T-cell (primary cell): ENCODE measurements at regions of chr5 and their contacts with region 1.

Region 1: DNA sequence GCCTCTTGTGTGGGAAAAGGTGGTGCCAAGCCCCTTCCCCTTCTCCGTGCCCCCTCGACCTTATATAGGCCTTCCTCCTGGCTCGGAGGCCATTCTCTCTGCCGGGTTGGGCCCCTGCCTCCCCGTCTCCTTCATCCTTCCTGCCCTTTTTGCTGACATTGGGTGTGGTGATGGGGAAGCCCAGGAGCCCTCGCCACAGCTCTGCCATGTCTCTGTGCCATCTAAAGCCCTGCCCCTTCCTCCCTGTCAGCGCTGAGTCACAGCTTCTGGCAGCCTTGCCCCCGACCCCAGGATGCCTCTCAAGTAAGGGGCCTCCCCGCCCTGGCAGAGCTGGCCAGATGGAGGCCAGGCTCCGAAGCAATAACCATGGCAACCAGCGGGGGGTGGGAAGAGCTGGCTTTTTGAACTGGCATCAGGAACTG is 30.4 kb downstream of the JADE2 start:
- DNase-seq: peak; percentile 38 to 89 (median 81)
- ATAC-seq: peak; percentile 88 to 93 (median 91)
- H3K4me3 ChIP-seq: no peak overlapping the region
- H3K4me3 Mint-ChIP-seq: peak overlapping the region; percentile 39 to 52 (median 41)
- H3K27ac ChIP-seq: peak overlapping the region; percentile 77
- H3K27ac Mint-ChIP-seq: peak overlapping the region; percentile 85 to 92
- H3K4me1 ChIP-seq: peaks cover 0 to 53% of the 10 kb centered on the region in 2 experiments
- H3K4me1 Mint-ChIP-seq: peaks cover 42 to 60% (median 50%) of the 10 kb centered on the region in 3 donors
- H3K27me3 ChIP-seq: no peaks in the 10 kb centered on the region
- H3K27me3 Mint-ChIP-seq: no peaks in the 10 kb centered on the region

Region 2: GRCh38 chr5:133895979-133896845 is 659.7 kb before region 1 on chr5:
- CTCF ChIA-PET with region 1: no interaction called
- POLR2A ChIA-PET with region 1: no interaction called
- DNase-seq: no peak
- ATAC-seq: no peak
- H3K4me3 ChIP-seq: no peak overlapping the region
- H3K4me3 Mint-ChIP-seq: no peak overlapping the region
- H3K27ac ChIP-seq: no peak overlapping the region
- H3K27ac Mint-ChIP-seq: no peak overlapping the region
- H3K4me1 ChIP-seq: no peaks in the 10 kb centered on the region
- H3K4me1 Mint-ChIP-seq: peaks cover 0 to 5% (median 0%) of the 10 kb centered on the region in 3 donors
- H3K27me3 ChIP-seq: peaks cover 0 to 21% of the 10 kb centered on the region in 2 experiments
- H3K27me3 Mint-ChIP-seq: no peaks in the 10 kb centered on the region

Region 3: DNA sequence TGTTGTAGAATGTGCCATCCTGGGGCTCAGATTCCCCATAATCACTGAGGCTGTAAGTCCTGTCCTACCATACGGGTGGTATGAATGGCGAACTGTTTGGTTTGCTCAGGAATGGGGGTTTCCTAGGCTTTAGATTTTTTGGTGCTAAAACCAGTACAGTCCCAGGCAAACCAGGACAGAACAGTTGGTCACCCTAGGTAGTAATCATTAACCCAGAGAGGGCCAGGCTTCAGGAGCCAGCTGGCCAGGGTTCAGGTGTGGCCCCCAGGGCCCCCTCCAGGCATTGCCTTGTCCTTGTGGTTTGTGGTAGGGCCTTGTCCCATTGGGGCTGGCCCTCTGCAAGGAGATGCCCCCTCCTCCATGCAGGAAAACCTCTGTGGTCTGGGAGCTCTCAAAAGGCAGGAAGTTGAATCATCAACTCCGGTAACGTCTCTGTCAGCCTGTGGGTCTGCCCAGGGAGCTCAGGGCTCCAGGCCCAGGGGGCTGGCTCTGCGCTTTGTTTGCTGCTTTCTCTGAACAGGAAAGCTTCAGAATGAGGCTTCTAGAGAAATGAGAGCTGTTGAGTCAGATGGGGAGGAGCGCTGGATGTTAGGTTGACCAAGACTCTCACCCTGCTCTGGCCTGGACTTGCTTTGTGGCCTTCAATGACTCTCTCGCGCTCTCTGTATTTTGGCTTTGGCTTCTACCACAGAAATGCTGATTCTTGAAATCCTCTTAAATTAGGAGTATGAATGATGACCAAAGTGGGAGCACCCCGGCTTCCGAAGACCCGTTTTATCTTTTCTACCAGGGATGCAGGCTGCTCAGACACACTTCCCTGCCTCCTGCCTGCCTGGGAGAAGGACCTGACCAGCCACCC is 52.6 kb before region 1 on chr5:
- CTCF ChIA-PET with region 1: no interaction called
- POLR2A ChIA-PET with region 1: no interaction called
- DNase-seq: peak in 29 of 35 experiments; percentile 6 to 66 (median 23)
- ATAC-seq: peak; percentile 83 to 97 (median 94)
- H3K4me3 ChIP-seq: peak overlapping the region in 1 of 2 donors; percentile 7
- H3K4me3 Mint-ChIP-seq: peak overlapping the region; percentile 31 to 64 (median 39)
- H3K27ac ChIP-seq: peak overlapping the region; percentile 70
- H3K27ac Mint-ChIP-seq: peak overlapping the region; percentile 92 to 93
- H3K4me1 ChIP-seq: peaks cover 12 to 26% of the 10 kb centered on the region in 2 experiments
- H3K4me1 Mint-ChIP-seq: peaks cover 22 to 32% (median 25%) of the 10 kb centered on the region in 3 donors
- H3K27me3 ChIP-seq: no peaks in the 10 kb centered on the region
- H3K27me3 Mint-ChIP-seq: no peaks in the 10 kb centered on the region

Region 4: DNA sequence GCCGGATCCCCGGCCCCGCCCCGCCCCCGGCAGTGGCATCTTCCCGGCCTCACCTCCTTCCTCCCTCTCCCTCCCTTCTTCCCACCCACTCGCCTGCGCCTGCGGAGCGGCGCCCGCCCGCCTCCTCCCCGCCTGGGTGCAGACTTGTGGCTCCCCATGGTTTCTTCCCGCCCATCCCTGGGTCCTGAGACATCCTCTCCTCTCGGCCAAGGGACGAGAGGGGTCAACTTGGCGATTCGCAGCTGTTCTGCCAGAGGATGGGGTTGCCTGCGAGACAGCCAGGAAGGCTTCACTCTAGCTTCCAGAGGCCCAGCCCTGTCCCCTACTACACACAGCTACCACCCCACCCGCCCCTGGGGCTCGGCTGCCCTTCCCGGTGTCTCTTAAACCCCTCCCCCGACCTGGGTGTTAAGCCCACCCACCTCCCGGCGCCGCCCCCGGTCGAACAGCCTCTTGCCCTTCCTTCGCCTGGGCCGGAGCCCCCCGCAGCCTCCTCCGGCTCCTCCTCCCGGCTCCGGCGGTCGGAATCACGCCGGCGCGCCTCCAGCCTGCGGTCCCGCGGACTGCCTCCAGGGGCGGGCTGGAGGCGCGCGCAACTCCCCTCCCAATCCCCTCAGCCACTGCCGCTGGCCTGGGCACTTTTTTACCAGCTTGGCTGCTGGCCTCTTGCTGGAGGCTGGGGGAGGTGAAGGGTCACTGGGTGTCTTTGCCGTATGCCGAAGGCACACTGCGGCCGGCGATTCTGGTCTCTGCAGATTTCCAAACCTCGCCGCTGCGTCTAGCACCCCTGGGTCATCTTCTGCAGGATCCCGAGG is 28.5 kb before region 1 on chr5:
- CTCF ChIA-PET with region 1: interaction called in 1 of 2 experiments, 14 read pairs
- POLR2A ChIA-PET with region 1: no interaction called
- DNase-seq: peak; percentile 21 to 82 (median 58)
- ATAC-seq: peak; percentile 29 to 38 (median 36)
- H3K4me3 ChIP-seq: peak overlapping the region; percentile 85 to 95
- H3K4me3 Mint-ChIP-seq: peak overlapping the region; percentile 87 to 99 (median 97)
- H3K27ac ChIP-seq: peak overlapping the region; percentile 43
- H3K27ac Mint-ChIP-seq: peak overlapping the region; percentile 89 to 92
- H3K4me1 ChIP-seq: peaks cover 15 to 62% of the 10 kb centered on the region in 2 experiments
- H3K4me1 Mint-ChIP-seq: peaks cover 53 to 58% (median 53%) of the 10 kb centered on the region in 3 donors
- H3K27me3 ChIP-seq: no peaks in the 10 kb centered on the region
- H3K27me3 Mint-ChIP-seq: no peaks in the 10 kb centered on the region

Region 5: GRCh38 chr5:134568761-134569695 is 13.1 kb after region 1 on chr5:
- CTCF ChIA-PET with region 1: no interaction called
- POLR2A ChIA-PET with region 1: no interaction called
- DNase-seq: no peak
- ATAC-seq: no peak
- H3K4me3 ChIP-seq: no peak overlapping the region
- H3K4me3 Mint-ChIP-seq: no peak overlapping the region
- H3K27ac ChIP-seq: no peak overlapping the region
- H3K27ac Mint-ChIP-seq: no peak overlapping the region
- H3K4me1 ChIP-seq: peaks cover 0 to 21% of the 10 kb centered on the region in 2 experiments
- H3K4me1 Mint-ChIP-seq: peaks cover 15 to 24% (median 17%) of the 10 kb centered on the region in 3 donors
- H3K27me3 ChIP-seq: no peaks in the 10 kb centered on the region
- H3K27me3 Mint-ChIP-seq: no peaks in the 10 kb centered on the region